Mammary epithelial cell (primary cell): ENCODE measurements at regions of chrX and their contacts with region 1.

Region 1: DNA sequence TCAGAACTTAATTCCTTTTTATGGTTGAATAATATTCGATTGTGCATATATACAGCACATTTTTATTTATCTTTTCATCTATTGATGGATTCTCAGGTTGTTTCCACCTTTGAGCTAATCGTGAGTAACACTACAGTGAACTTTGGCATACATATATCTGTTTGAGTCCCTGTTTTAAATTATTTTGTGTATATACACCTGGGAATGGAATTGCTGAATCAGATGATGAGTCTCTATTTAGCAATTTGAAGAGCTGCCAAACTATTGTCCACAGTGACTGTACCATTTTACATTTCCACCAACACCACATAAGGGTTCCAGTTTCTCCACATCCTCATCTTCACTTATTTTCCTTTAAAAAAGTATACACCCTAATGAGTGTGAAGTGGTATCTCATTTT is 166.2 kb upstream of the FGF13 start:
- DNase-seq: peak; percentile 84
- H3K4me3 ChIP-seq: no peak overlapping the region
- H3K27ac ChIP-seq: peak overlapping the region; percentile 65
- H3K4me1 ChIP-seq: no peaks in the 10 kb centered on the region
- H3K27me3 ChIP-seq: no peaks in the 10 kb centered on the region
- CTCF ChIP-seq: no peak

Region 2: GRCh38 chrX:138925330-138925729 is 47.6 kb after region 1 on chrX:
- CTCF ChIA-PET with region 1: no interaction called
- dilution Hi-C with region 1: no loop called
- in situ Hi-C with region 1: no loop called
- intact Hi-C with region 1: loop called (anchors 5 kb)
- DNase-seq: peak; percentile 81
- H3K4me3 ChIP-seq: no peak overlapping the region
- H3K27ac ChIP-seq: no peak overlapping the region
- H3K4me1 ChIP-seq: peaks cover 12% of the 10 kb centered on the region
- H3K27me3 ChIP-seq: no peaks in the 10 kb centered on the region
- CTCF ChIP-seq: no peak

Region 3: DNA sequence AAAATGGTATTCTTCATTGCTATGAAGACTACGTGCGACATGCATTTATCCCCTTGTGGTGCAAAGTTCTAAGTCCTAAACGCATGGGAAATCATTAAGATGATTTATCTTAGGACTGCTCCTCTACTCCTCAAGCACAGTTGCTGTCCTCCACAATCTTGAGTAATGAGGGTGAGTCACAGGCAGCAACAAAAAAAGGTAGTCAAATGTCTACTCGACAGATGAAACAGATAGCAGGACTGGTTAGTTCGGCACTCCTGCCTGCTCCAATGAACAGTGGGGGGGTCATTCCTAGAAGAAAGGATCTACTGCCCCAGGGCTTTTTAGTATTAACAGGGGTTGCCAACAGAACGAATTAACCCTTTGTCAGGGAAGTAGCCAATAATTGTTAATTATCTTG is 67.5 kb after region 1 on chrX:
- CTCF ChIA-PET with region 1: no interaction called
- dilution Hi-C with region 1: no loop called
- in situ Hi-C with region 1: no loop called
- intact Hi-C with region 1: no loop called
- DNase-seq: peak; percentile 51
- H3K4me3 ChIP-seq: no peak overlapping the region
- H3K27ac ChIP-seq: no peak overlapping the region
- H3K4me1 ChIP-seq: no peaks in the 10 kb centered on the region
- H3K27me3 ChIP-seq: no peaks in the 10 kb centered on the region
- CTCF ChIP-seq: no peak

Region 4: DNA sequence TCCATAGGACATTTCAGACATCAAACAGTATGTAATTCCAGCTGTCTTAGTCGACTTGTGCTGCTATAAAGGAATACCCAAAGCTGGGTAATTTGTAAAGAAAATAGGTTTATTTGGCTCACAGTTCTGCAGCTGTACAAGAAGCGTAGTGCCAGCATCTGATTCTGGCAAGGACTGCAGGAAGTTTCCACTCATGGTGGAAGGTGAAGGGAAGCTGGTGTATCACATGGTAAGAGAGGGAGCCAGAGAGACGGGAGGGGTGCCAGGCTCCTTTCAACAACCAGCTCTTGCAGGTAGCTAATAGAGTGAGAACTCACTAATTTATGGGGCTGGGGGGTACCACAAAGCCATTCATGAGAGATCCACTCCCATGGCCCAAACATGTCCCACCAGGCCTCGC is 86.8 kb after region 1 on chrX:
- CTCF ChIA-PET with region 1: no interaction called
- dilution Hi-C with region 1: no loop called
- in situ Hi-C with region 1: no loop called
- intact Hi-C with region 1: no loop called
- DNase-seq: no peak
- H3K4me3 ChIP-seq: no peak overlapping the region
- H3K27ac ChIP-seq: no peak overlapping the region
- H3K4me1 ChIP-seq: no peaks in the 10 kb centered on the region
- H3K27me3 ChIP-seq: peaks cover 3% of the 10 kb centered on the region
- CTCF ChIP-seq: no peak